ENCODE measurements at regions of chr10 and their contacts with region 1.

Region 1: DNA sequence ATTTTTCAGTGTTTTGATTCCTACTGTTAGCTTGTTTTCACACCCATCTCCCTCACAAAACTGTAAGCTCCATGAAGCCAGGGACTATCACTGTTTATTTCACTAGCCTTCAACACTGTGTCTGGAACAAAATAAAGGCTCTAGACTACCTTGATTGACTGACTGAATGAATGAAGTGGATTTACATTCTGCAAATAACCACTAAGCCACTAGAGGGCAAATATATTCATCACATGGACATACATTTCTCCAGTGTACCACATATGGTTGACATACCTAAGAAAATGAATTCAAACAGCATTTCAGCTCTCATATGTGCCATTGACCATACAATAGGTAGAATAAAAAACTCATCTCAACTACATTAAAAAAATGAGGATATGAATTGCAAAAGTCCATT is 185.9 kb downstream of the RAB11FIP2 start:
- DNase-seq: no peak
- H3K4me3 ChIP-seq: no peak overlapping the region
- H3K27ac ChIP-seq: no peak overlapping the region
- H3K4me1 ChIP-seq: no peaks in the 10 kb centered on the region
- H3K27me3 ChIP-seq: no peaks in the 10 kb centered on the region
- CTCF ChIP-seq: no peak

Region 2: GRCh38 chr10:118106426-118106825 is 245.6 kb after region 1 on chr10:
- intact Hi-C with region 1: loop called (anchors 10 kb)
- DNase-seq: peak; percentile 18
- H3K4me3 ChIP-seq: no peak overlapping the region
- H3K27ac ChIP-seq: no peak overlapping the region
- H3K4me1 ChIP-seq: no peaks in the 10 kb centered on the region
- H3K27me3 ChIP-seq: no peaks in the 10 kb centered on the region
- CTCF ChIP-seq: no peak

Region 3: DNA sequence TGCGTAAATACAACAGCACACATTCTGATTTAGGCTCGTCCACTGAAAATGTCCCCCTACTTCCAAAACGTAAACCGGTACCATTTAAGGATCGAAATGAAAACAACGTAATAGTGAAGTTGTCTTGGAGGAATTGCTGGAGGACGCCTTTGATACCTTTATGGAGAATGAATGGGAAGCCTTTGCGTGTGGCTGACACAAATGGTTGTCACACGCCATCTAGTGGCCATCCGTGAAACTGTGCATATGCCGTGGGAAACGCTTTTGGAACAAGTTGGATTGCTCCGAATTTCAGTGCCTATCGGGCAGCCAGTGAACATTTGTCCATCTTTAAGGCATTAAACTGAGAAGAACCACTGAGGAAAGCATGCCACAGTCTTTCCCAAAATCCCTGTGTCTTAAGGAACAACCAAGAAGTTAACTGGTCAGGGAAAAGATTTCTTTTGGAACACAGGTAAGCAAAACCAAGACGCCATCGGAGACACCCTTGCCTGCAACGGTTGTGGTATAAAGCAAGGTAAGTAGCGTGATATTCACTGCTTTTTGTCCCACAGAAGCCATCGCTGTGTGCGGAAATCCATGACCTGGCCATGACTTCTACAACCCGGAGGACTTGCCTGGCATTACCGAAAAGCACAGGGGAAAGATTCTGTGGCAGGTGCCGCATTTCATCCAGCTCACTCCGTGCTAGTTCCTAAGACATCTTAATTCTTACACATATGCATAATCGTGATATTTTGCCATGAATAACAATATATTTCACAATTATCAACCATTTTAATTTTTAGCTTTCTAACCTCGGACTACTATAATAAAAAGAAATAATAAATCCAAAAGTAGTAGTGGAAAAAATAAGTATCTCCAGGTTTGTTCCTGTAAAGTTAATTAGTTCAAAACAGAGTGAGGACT is 380.7 kb after region 1 on chr10:
- intact Hi-C with region 1: loop called (anchors 5 kb)
- DNase-seq: peak; percentile 82
- H3K4me3 ChIP-seq: no peak overlapping the region
- H3K27ac ChIP-seq: no peak overlapping the region
- H3K4me1 ChIP-seq: no peaks in the 10 kb centered on the region
- H3K27me3 ChIP-seq: peaks cover 3% of the 10 kb centered on the region
- CTCF ChIP-seq: peak; percentile 90